Vagina (tissue), 2 donors: ENCODE measurements at regions of chr12 and their contacts with region 1.

Region 1: GRCh38 chr12:111396726-111397445 is 8.8 kb upstream of the SH2B3 start:
- DNase-seq: no peak
- H3K4me3 ChIP-seq: peak overlapping the region; percentile 17 to 43
- H3K27ac ChIP-seq: peak overlapping the region; percentile 58
- H3K4me1 ChIP-seq: peaks cover 14% of the 10 kb centered on the region
- H3K27me3 ChIP-seq: no peaks in the 10 kb centered on the region
- CTCF ChIP-seq: peak; percentile 99 to 100 (median 99)
- POLR2A ChIP-seq: no peak

Region 2: GRCh38 chr12:111529424-111530368 is 132.8 kb after region 1 on chr12:
- intact Hi-C with region 1: loop called (anchors 5 kb)
- DNase-seq: no peak
- H3K4me3 ChIP-seq: no peak overlapping the region
- H3K27ac ChIP-seq: no peak overlapping the region
- H3K4me1 ChIP-seq: no peaks in the 10 kb centered on the region
- H3K27me3 ChIP-seq: no peaks in the 10 kb centered on the region
- CTCF ChIP-seq: peak in 2 of 3 experiments; percentile 53 to 69
- POLR2A ChIP-seq: no peak

Region 3: GRCh38 chr12:111685744-111686517 is 289.0 kb after region 1 on chr12 and contains the starts of genes ACAD10 and BRAP:
- intact Hi-C with region 1: loop called (anchors 10 kb)
- DNase-seq: peak in 1 of 2 donors; percentile 91
- H3K4me3 ChIP-seq: peak within 1 kb of the TSS; percentile 84 to 92
- H3K27ac ChIP-seq: peak within 1 kb of the TSS; percentile 90
- H3K4me1 ChIP-seq: peaks cover 36% of the 10 kb centered on the region
- H3K27me3 ChIP-seq: no peaks in the 10 kb centered on the region
- CTCF ChIP-seq: no peak
- POLR2A ChIP-seq: no peak
- total RNA-seq, gene ACAD10: 26.5 TPM
- total RNA-seq, gene BRAP: 14.0 TPM